Prostate gland (tissue), 2 donors: ENCODE measurements at regions of chr2 and their contacts with region 1.

Region 1: DNA sequence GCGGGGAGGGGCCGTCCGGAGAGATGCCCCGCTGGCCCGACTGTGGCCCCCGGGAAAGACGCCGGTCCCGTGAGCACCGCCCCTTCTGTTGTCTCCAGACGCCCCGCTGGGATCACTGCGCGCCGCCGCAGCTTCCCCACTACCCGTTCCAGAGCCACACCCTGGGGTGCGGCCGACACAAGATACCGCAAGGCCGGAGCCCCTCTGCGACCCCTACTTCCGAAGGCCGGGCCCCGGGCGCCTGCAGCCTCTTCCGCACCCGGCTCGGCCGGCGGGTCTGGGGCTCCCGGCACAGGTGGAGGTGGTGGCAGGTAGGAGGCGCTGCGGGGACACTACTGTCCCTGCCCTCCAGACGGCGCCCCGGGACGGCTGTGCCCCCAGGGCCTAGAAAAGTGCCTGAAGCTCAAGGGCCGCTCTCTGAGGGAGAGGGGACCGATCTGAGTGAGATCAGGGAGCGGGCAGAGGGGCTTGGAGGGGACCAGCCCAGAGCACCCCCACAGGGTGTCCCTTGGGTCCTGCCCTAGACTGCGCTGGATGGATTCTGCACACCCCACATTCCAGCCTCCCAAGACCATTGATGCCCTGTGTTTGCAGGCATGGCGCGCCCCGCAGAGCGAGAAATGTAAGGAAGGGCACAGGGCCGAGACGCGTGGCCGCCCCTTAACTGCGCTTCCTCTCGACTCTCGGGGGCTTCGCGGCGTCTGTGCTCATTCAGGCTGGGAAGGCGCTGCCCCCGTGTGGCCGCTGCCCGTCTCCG is 80.0 kb downstream of the GFPT1 start:
- DNase-seq: peak; percentile 60
- H3K4me3 ChIP-seq: peak overlapping the region; percentile 42 to 46
- H3K27ac ChIP-seq: peak overlapping the region; percentile 58 to 70
- H3K4me1 ChIP-seq: peaks cover 21% of the 10 kb centered on the region
- H3K27me3 ChIP-seq: no peaks in the 10 kb centered on the region
- CTCF ChIP-seq: peak; percentile 71 to 80 (median 76)
- POLR2A ChIP-seq: no peak

Region 2: DNA sequence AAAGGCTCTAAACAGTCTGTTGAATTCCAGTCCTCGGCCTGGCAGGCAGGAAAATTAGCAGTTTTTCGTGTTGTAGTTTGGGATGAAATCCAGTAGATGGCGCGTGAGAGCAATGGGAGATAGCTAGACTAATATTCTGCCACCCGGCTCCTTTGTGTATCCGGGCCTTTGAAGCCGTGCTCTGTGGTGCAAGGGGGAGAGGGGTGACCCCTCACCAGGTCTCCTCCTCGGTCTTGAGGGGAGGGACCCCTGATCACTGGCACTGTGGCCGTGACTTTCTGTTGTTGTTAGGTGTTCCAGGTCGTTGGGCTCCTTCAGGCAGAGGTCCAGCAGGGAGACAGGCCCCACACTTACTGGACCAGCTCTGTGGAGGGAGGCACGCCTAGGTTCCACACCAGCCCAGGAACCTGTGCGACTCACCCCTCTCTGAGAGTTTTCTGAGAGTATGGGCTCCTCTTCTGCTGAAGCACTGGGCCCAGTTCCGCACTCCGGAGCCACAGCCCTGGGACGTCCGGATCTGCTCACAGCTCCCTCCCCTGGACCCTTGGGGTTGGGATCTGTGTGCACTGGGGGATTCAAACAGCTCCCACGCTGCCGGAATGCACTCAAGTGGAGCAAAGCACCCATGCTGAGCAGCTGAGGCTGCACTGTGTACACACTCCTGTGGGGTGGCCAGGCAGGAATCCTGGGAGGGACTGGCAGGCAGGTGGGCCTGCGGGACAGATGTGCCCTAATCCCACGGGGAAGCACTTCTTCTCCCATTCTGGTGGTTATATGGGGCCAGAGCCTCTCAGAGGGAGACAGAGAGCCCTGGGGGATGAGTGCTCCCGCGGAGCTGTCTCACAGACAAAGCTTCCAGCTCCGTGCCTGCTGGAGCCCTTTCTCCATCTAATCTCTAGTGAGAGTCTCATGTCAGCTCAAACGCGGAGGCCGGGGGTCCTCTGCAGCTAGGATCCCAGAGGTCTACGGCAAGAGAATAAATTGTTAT is 363.1 kb before region 1 on chr2:
- intact Hi-C with region 1: loop called (anchors 10 kb)
- DNase-seq: peak; percentile 63
- H3K4me3 ChIP-seq: no peak overlapping the region
- H3K27ac ChIP-seq: no peak overlapping the region
- H3K4me1 ChIP-seq: no peaks in the 10 kb centered on the region
- H3K27me3 ChIP-seq: no peaks in the 10 kb centered on the region
- CTCF ChIP-seq: peak; percentile 47 to 84 (median 68)
- POLR2A ChIP-seq: no peak

Region 3: DNA sequence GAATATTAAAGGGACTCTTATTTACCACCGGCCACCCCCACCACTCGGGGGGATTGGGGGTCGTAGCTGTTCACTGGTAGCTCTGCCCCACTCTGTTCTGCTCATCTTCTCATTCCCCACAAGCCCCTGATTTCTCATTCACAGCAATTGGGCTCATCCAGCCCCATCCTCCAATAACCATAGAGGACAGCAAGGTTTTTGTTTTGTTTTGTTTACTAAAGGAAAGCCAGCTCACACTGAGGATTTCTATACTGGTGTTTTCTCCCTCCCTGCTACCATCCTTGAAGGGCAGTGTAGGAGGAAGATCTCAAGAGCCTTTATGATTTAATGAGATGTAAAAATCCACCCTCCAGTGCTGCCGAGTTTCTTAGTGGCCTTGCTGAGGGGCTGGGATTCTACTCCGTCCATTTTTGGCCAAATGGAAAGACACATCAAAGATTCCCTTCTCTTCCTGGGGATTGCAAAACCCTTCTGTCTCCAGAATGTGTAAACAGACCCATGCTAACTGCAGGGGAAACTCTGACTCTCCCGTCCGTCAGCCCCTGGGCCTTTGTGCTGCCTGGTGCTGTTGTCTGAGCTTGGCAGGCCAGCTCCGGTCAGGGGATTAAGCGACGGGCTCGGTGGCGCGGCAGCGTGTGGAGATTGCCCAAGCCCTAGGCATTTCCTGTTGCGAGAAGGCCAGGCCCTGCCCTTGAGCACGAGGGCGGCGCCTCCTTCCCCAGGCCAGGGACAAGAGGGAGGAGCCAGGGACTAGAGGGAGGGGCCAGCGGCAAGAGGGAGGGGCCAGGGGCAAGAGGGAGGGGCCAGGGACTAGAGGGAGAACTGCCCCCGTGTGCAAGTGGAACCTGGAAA is 129.0 kb before region 1 on chr2:
- intact Hi-C with region 1: loop called (anchors 10 kb)
- DNase-seq: peak; percentile 33
- H3K4me3 ChIP-seq: no peak overlapping the region
- H3K27ac ChIP-seq: peak overlapping the region; percentile 48 to 63
- H3K4me1 ChIP-seq: no peaks in the 10 kb centered on the region
- H3K27me3 ChIP-seq: no peaks in the 10 kb centered on the region
- CTCF ChIP-seq: no peak
- POLR2A ChIP-seq: no peak

Region 4: GRCh38 chr2:69242651-69243051 is 64.3 kb before region 1 on chr2:
- intact Hi-C with region 1: loop called (anchors 5 kb)
- DNase-seq: no peak
- H3K4me3 ChIP-seq: no peak overlapping the region
- H3K27ac ChIP-seq: no peak overlapping the region
- H3K4me1 ChIP-seq: no peaks in the 10 kb centered on the region
- H3K27me3 ChIP-seq: no peaks in the 10 kb centered on the region
- CTCF ChIP-seq: no peak
- POLR2A ChIP-seq: no peak